Vagina (tissue), 2 donors: ENCODE measurements at regions of chr1 and their contacts with region 1.

Region 1: DNA sequence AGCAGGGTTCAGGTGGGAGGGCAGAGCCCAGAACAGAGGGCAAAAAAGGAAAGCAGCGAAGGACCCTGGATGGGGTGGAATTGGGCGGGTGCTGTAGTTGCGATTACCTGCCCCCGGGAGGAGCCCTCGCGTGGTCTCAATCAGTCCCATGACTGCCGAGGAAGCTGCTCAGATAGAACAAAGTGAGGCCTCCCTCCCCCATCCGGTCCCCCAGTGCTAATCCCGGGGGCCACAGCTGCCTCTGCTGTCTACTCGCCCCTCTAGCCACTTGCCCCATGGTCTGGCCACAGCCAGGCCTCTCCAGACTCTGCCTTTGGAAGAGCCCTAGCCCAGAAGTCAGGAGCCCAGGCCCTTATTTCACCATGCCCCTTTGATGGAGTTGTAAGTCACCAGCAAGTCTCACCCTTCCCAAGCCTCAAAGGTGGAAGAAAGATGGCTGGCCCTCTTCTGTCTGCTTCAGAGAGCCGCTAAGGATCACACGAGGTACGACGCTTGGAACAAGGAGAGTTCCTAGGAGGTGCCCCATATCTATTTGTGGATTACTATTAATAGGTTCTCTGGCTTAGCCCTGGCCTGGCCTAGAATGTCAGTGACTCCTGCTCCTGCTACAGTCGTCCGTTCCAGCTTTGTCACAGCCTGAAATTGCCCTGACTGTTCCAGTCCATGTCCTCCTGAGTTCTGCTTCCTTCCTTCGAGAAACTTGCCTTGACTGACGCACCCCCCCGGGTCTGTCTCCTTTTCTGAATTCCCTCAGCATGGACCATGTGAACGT is 16.4 kb downstream of the ECHDC2 start:
- DNase-seq: no peak
- H3K4me3 ChIP-seq: no peak overlapping the region
- H3K27ac ChIP-seq: no peak overlapping the region
- H3K4me1 ChIP-seq: no peaks in the 10 kb centered on the region
- H3K27me3 ChIP-seq: no peaks in the 10 kb centered on the region
- CTCF ChIP-seq: no peak
- POLR2A ChIP-seq: no peak

Region 2: DNA sequence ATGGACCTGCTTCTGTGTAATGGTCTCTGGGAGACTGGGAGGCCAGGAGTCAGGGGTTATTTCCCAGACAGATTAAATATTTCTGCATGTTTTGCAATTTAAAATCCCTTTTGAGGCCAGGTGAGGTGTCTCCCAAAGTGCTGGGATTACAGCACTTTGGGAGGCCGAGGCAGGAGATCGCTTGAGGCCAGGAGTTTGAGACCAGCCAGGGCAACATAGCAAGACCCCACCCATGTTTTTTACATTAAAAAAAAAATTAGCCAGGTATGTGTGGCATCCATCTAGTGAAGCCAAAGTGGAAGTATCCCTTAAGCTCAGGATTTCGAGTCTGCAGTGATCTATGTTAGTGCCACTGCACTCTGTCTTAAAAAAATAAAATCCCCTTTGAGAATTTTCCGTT is 17.6 kb before region 1 on chr1:
- intact Hi-C with region 1: no loop called
- DNase-seq: no peak
- H3K4me3 ChIP-seq: no peak overlapping the region
- H3K27ac ChIP-seq: no peak overlapping the region
- H3K4me1 ChIP-seq: no peaks in the 10 kb centered on the region
- H3K27me3 ChIP-seq: no peaks in the 10 kb centered on the region
- CTCF ChIP-seq: no peak
- POLR2A ChIP-seq: no peak

Region 3: DNA sequence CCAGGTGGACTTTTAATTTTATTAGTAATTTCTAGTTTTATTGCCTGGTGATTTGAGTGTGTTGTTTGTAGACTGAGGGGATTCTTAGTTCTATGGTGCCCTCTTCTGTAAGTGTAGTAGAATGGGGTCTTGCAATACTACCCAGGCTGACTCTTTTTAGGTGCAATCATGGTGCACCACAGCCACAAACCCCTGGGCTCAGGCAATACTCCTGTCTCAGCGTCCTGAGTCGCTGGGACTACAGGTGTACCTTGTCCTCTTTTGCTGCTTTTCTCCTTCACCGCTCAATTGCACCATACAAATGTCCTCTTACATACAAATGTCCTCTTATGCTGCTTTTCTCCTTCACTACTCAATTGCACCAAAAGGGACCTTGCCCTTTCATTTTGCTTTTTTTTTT is 65.0 kb after region 1 on chr1:
- intact Hi-C with region 1: no loop called
- DNase-seq: no peak
- H3K4me3 ChIP-seq: no peak overlapping the region
- H3K27ac ChIP-seq: no peak overlapping the region
- H3K4me1 ChIP-seq: no peaks in the 10 kb centered on the region
- H3K27me3 ChIP-seq: no peaks in the 10 kb centered on the region
- CTCF ChIP-seq: no peak
- POLR2A ChIP-seq: no peak

Region 4: DNA sequence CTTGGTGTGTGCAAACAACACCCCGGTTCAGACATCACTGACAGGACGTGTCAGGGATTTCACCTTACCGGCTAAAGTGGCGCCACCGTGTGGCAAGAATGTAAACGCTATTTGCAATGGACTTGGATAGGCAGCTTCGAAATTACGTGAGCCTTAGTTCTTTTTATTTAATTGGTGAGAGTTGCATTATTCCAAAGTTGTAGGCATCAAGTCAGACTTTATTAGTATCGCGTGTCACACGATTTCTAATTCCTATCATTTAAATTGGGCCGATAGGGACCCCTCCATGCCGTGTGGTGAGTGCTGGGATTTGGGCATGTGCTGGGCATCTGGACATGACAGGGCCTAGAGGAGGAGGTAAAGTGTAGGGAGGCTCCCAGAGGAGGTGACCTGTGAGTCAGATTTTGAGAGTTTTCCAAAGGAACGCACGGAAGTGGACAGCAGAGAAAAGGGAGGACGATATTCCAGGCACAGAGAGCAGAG is 277.0 kb after region 1 on chr1:
- intact Hi-C with region 1: loop called (anchors 10 kb)
- DNase-seq: no peak
- H3K4me3 ChIP-seq: no peak overlapping the region
- H3K27ac ChIP-seq: peak overlapping the region; percentile 70
- H3K4me1 ChIP-seq: peaks cover 23% of the 10 kb centered on the region
- H3K27me3 ChIP-seq: no peaks in the 10 kb centered on the region
- CTCF ChIP-seq: peak; percentile 65 to 80 (median 77)
- POLR2A ChIP-seq: no peak